ENCODE measurements at regions of chr11 and their contacts with region 1.

Region 1: GRCh38 chr11:65911682-65912568 is 6.9 kb downstream of the C11orf68 start:
- DNase-seq: peak; percentile 58
- H3K4me3 ChIP-seq: no peak overlapping the region
- H3K27ac ChIP-seq: peak overlapping the region; percentile 74
- H3K4me1 ChIP-seq: peaks cover 46% of the 10 kb centered on the region
- H3K27me3 ChIP-seq: no peaks in the 10 kb centered on the region
- CTCF ChIP-seq: peak in 1 of 2 donors; percentile 17
- POLR2A ChIP-seq: no peak

Region 2: GRCh38 chr11:65894034-65894591 is 17.8 kb before region 1 on chr11:
- CTCF ChIA-PET with region 1: interaction called, 73 read pairs
- POLR2A ChIA-PET with region 1: interaction called, 28 read pairs
- dilution Hi-C with region 1: no loop called
- intact Hi-C with region 1: no loop called
- DNase-seq: peak; percentile 52
- H3K4me3 ChIP-seq: peak overlapping the region in 2 of 3 experiments; percentile 24 to 30
- H3K27ac ChIP-seq: peak overlapping the region; percentile 99
- H3K4me1 ChIP-seq: peaks cover 72% of the 10 kb centered on the region
- H3K27me3 ChIP-seq: no peaks in the 10 kb centered on the region
- CTCF ChIP-seq: no peak
- POLR2A ChIP-seq: peak; percentile 91

Region 3: GRCh38 chr11:65900125-65900898 is 11.6 kb before region 1 on chr11 and contains the start of gene FOSL1:
- CTCF ChIA-PET with region 1: interaction called, 13 read pairs
- POLR2A ChIA-PET with region 1: interaction called, 17 read pairs
- dilution Hi-C with region 1: no loop called
- intact Hi-C with region 1: loop called (anchors 1 kb)
- DNase-seq: peak; percentile 94
- H3K4me3 ChIP-seq: peak within 1 kb of the TSS; percentile 58 to 79 (median 69)
- H3K27ac ChIP-seq: peak within 1 kb of the TSS; percentile 87
- H3K4me1 ChIP-seq: peaks cover 40% of the 10 kb centered on the region
- H3K27me3 ChIP-seq: no peaks in the 10 kb centered on the region
- CTCF ChIP-seq: no peak
- POLR2A ChIP-seq: peak; percentile 99
- total RNA-seq, gene FOSL1: 52.6 and 53.8 TPM in 2 replicates

Region 4: DNA sequence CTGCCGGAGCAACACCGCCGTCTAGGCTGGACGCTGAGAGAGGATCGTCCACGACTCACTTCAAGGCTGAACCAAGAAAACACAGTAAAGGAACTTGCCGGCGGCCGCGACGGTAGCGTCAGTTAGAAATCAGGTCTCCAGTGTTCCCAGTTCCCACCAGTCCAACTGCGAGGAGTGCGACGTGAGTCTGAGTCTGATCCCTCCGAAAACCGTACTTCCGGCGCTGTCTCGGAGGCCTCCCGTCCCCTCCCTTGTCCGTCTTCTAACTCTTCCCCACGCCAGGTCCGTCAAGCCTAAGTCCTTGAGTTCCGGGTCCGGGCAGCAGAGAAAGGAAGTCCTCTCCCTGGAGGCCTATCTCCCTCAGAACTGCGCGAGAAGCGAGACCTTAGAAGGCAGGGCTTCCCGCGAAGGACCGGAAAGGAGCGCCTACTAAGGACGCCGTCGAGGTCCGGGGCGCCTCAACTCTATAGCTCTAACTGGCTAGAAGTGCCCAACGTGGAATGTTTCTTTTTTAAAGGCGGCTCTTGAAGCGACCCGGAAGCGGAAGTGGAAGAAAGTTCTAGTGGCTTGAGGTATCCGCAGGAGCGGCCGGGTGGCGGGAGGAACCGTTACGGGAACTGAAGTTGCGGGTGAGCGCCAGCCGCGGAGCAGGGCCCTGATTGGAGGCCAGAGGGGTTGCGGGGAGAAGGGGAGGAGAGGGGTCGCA is 90.2 kb after region 1 on chr11 and contains the starts of genes BANF1 and EIF1AD:
- CTCF ChIA-PET with region 1: no interaction called
- POLR2A ChIA-PET with region 1: no interaction called
- dilution Hi-C with region 1: no loop called
- intact Hi-C with region 1: no loop called
- DNase-seq: peak; percentile 98
- H3K4me3 ChIP-seq: peak within 1 kb of the TSS; percentile 68 to 88 (median 82)
- H3K27ac ChIP-seq: peak within 1 kb of the TSS; percentile 66
- H3K4me1 ChIP-seq: peaks cover 9% of the 10 kb centered on the region
- H3K27me3 ChIP-seq: no peaks in the 10 kb centered on the region
- CTCF ChIP-seq: no peak
- POLR2A ChIP-seq: peak; percentile 93
- total RNA-seq, gene BANF1: 246 and 269 TPM in 2 replicates
- total RNA-seq, gene EIF1AD: 39.7 and 42.4 TPM in 2 replicates

Measured in endothelial cell of umbilical vein (primary cell).